ENCODE measurements at regions of chr1 and their contacts with region 1.

Region 1: GRCh38 chr1:3419415-3420204 is 34.9 kb upstream of the ARHGEF16 start:
- DNase-seq: no peak
- H3K4me3 ChIP-seq: no peak overlapping the region
- H3K27me3 ChIP-seq: peaks cover 6% of the 10 kb centered on the region; the same call in 1 of the 2 replicates
- CTCF ChIP-seq: no peak

Region 2: DNA sequence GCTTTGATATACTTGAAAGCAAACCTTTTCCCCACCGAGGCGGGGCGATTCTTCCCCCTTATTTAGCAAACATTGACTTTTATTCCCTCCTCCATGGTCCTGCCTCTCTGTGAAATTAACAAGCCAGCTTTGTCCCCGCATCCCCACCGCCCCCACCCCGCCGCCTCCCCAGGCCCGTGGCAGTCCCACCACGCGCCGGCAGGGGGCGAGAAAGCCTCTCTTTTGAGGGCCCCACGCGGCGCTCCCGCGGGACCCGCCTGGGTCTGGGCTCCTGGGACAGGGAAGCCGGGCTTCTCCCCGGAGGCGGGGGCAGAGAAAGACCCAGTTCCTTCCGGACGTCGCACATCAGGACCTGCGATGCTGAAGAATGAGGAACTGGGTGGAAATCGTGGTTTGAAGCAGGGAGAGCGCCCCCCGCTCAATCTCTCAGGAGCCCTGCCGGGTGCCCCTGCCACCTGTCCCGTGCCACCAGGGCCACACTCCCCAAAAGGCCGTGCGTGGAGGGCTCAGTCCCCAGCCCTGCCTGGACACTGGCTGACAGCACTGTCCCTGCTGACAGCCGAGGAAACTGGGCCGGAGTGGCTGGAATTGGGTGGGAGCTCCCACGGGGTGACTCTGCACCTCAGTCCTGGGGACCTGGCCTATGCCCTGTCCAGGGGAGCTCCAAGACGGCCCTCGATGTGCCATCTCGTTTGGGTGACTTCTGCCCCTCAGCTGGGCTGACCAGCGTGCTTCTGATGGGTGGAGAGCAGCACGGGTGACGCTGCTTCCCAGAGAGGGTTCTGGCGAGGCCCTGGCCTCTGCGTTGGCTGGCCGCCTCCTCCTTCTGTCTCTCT is 406.9 kb before region 1 on chr1:
- CTCF ChIA-PET with region 1: interaction called, 12 read pairs
- POLR2A ChIA-PET with region 1: no interaction called
- DNase-seq: no peak
- H3K4me3 ChIP-seq: no peak overlapping the region
- H3K27me3 ChIP-seq: no peaks in the 10 kb centered on the region
- CTCF ChIP-seq: peak; percentile 59

Region 3: GRCh38 chr1:3355089-3355488 is 64.5 kb before region 1 on chr1:
- CTCF ChIA-PET with region 1: no interaction called
- POLR2A ChIA-PET with region 1: interaction called, 19 read pairs
- DNase-seq: no peak
- H3K4me3 ChIP-seq: no peak overlapping the region
- H3K27me3 ChIP-seq: peaks cover 11% of the 10 kb centered on the region
- CTCF ChIP-seq: no peak

Measured in BJ (cell line).